SK-N-SH (cell line): ENCODE measurements at regions of chr12 and their contacts with region 1.

Region 1: GRCh38 chr12:71746983-71747611 is 7.6 kb upstream of the RAB21 start:
- DNase-seq: peak; percentile 49
- H3K4me3 ChIP-seq: no peak overlapping the region; a peak in 1 of 4 replicates
- H3K27ac ChIP-seq: no peak overlapping the region
- H3K4me1 ChIP-seq: no peaks in the 10 kb centered on the region
- H3K27me3 ChIP-seq: peaks cover 5% of the 10 kb centered on the region; the same call in 1 of the 2 replicates
- CTCF ChIP-seq: peak; percentile 88
- EP300 ChIP-seq: no peak
- RAD21 ChIP-seq: peak; percentile 92

Region 2: DNA sequence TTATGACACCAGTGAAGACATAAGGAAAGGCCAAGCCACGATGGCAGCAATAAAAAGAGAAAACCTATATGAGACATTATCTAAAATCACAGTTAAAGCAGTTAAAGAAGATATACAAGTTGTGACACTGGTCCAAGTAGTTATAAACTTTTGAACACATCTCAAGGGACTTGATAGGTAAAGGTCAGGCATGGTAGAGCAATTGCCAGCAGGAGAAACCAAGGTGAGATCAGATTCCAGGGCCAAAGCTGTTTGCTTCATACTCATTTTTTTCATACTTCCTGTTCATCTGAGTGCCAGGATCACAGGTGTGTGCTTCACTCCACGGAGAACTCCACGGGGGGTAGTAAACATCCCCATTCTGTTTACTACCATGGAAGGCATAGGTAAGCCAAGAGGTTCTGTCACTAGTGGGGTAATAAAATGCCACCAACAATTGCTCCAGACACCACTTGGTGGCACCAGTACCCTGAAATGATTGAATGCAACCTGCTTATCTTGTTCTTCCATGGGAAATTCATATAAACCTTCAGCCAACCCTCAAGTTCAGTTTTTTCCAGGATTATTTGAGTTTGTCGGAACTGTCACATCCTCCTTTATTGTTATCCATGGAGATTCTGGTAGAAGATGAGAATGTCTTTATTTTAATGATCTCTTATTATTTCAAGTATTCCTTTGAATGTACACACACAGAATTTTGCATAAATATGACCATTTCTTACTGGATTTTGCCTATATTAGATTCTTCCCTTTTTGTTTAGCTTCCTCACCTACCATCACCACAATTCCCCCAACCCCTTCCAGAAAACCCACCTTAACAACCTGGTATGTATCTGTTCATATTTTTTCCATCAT is 530.1 kb before region 1 on chr12:
- CTCF ChIA-PET with region 1: interaction called, 12 read pairs
- POLR2A ChIA-PET with region 1: no interaction called
- DNase-seq: peak; percentile 13
- H3K4me3 ChIP-seq: no peak overlapping the region
- H3K27ac ChIP-seq: no peak overlapping the region
- H3K4me1 ChIP-seq: peaks cover 0 to 9% of the 10 kb centered on the region in 2 experiments; a peak in 2 of 4 replicates
- H3K27me3 ChIP-seq: no peaks in the 10 kb centered on the region
- CTCF ChIP-seq: peak; percentile 54
- EP300 ChIP-seq: no peak
- RAD21 ChIP-seq: peak; percentile 80

Region 3: GRCh38 chr12:71551529-71551928 is 195.6 kb before region 1 on chr12:
- CTCF ChIA-PET with region 1: interaction called, 10 read pairs
- POLR2A ChIA-PET with region 1: no interaction called
- DNase-seq: peak; percentile 22
- H3K4me3 ChIP-seq: no peak overlapping the region
- H3K27ac ChIP-seq: no peak overlapping the region
- H3K4me1 ChIP-seq: no peaks in the 10 kb centered on the region; a peak in 1 of 4 replicates
- H3K27me3 ChIP-seq: no peaks in the 10 kb centered on the region
- CTCF ChIP-seq: peak; percentile 58
- EP300 ChIP-seq: no peak
- RAD21 ChIP-seq: peak; percentile 81

Region 4: GRCh38 chr12:71636704-71637115 is 110.4 kb before region 1 on chr12:
- CTCF ChIA-PET with region 1: interaction called, 33 read pairs
- POLR2A ChIA-PET with region 1: no interaction called
- DNase-seq: peak; percentile 53
- H3K4me3 ChIP-seq: no peak overlapping the region
- H3K27ac ChIP-seq: no peak overlapping the region; a peak in 1 of 4 replicates
- H3K4me1 ChIP-seq: peaks cover 0 to 5% of the 10 kb centered on the region in 2 experiments; a peak in 2 of 4 replicates
- H3K27me3 ChIP-seq: no peaks in the 10 kb centered on the region
- CTCF ChIP-seq: peak; percentile 84
- EP300 ChIP-seq: no peak
- RAD21 ChIP-seq: peak; percentile 85

Region 5: DNA sequence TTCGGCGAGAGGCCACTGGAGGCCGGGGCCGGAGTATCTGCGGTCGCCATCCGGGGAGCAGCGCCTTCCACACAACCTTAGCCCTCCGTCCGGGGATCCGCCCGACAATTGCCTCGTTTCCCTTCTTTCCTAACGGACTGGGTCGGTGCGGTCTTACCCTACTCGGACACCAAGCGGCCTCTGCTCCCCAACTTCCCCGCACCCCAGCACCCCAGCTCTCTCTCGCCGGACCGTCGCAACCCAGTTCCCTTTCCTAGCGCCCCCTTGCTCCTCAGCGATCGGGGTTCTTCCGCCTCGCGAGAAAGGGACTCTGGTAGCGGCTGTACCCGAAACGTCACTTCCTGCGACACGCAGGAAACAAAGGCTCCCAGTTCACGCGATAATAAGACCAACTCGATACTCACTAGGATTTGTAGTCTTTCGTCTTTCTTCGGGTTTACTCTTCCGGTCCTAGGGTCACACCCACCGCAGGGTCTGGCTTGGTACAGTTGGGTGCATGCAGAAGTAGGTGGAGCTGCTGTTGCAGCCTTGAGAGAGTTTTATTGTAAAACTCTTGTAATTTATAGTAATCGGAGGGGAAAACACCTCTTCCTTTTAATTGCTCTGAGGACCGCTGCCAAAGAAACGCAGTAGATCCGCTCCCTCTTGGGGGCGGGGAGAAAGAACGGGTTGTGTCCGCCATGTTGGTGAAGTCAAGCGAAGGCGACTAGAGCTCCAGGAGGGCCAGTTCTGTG is 83.4 kb before region 1 on chr12 and contains the start of gene ZFC3H1:
- CTCF ChIA-PET with region 1: interaction called, 9 read pairs
- POLR2A ChIA-PET with region 1: interaction called, 12 read pairs
- DNase-seq: peak; percentile 88
- H3K4me3 ChIP-seq: peak within 1 kb of the TSS; percentile 85 to 98
- H3K27ac ChIP-seq: peak within 1 kb of the TSS; percentile 88 to 99
- H3K4me1 ChIP-seq: peaks cover 5 to 12% of the 10 kb centered on the region in 2 experiments; a peak in 3 of 4 replicates
- H3K27me3 ChIP-seq: no peaks in the 10 kb centered on the region
- CTCF ChIP-seq: peak; percentile 42
- EP300 ChIP-seq: no peak; a peak in 1 of 4 replicates
- RAD21 ChIP-seq: no peak
- polyA plus RNA-seq, gene ZFC3H1: 19.1 and 32.0 TPM in 2 replicates

Region 6: DNA sequence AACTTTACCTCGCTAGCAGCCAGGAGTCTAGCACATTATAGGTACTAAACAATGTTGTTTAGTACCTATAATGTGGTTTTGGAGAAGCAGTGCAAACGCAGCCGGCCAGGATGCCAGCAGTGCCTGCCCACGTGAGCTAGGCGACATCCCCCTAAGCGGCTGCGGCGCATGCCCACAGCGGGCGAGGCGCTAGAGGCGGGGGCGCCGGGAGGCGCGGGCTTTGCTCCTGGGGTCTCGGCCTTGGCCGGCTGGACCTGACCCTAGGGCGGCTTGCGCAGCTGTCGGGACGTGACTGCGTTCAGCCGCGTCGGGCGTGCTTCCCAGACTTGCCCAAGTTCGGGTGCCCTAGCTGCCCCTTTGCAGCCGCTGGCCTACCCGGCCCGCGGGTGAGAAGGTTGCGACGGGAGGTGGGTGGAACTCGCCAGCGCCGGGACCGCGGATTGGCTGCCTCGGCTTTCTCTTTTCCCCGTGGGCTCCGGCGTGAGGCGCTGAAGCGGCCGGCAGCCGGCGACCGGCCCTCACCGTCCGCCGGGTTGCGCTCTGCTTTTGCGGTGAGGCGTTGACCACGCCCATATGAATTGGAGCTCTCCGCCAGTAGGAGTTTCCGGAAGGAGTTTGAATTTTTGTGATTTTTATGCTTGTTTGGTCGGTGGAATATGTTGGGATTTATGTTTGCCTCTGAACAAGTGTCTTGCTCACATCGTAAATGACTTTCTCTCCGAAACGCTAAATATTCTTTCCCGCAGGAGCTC is 61.0 kb before region 1 on chr12 and contains the start of gene TMEM19:
- CTCF ChIA-PET with region 1: interaction called, 11 read pairs
- POLR2A ChIA-PET with region 1: no interaction called
- DNase-seq: peak; percentile 91
- H3K4me3 ChIP-seq: peak within 1 kb of the TSS; percentile 69 to 76
- H3K27ac ChIP-seq: peak within 1 kb of the TSS; percentile 86 to 96
- H3K4me1 ChIP-seq: peaks cover 2 to 7% of the 10 kb centered on the region in 2 experiments; a peak in 3 of 4 replicates
- H3K27me3 ChIP-seq: no peaks in the 10 kb centered on the region
- CTCF ChIP-seq: peak; percentile 41
- EP300 ChIP-seq: no peak
- RAD21 ChIP-seq: peak; percentile 46
- polyA plus RNA-seq, gene TMEM19: 12.6 and 17.4 TPM in 2 replicates

Region 7: DNA sequence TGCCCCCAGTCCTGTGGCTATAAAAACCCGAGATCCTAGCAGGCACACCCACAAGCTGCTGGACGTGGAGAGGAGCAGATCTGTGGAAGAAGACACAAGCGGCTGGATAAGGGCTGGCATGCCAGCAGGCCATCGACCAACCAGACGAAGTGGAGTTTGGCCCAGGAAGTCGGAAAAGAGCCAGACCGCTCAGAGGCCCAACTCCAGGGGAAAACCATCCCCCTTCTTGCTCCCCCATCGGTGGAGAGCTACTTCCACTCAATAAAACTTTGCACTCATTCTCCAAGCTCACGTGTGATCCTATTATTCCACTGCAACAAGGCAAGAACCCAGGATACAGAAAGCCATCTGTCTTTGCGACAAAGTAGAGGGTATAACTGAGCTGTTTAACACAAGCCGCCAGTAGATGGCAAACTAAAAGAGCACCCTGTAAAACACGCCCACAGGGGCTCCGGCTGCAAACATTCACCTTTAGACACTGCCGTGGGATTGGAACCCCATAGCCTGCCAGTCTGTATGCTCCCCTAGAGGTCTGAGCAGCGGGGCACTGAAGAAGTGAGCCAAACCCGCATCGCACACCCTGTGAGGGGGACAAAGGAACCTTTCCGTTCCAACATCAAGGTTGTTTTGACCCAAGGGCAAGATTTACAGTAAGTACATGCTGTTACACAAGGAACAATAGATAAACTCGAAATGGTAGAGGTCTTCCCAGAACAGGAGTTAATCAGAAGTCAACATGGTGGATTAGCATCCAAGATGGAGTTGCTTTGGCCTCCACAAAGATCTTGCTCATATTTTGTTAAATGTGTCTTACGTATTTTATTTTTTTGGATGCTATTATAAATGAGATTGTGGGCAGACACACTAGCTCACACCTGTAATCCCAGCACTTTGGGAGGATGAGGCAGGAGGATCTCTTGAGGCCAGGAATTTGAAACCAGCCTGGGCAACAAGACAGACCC is 15.1 kb before region 1 on chr12:
- CTCF ChIA-PET with region 1: interaction called, 10 read pairs
- POLR2A ChIA-PET with region 1: no interaction called
- DNase-seq: no peak
- H3K4me3 ChIP-seq: no peak overlapping the region
- H3K27ac ChIP-seq: peak overlapping the region in 1 of 2 experiments; percentile 65; a peak in 2 of 4 replicates
- H3K4me1 ChIP-seq: no peaks in the 10 kb centered on the region
- H3K27me3 ChIP-seq: no peaks in the 10 kb centered on the region
- CTCF ChIP-seq: no peak
- EP300 ChIP-seq: no peak
- RAD21 ChIP-seq: no peak